ENCODE measurements at regions of chr3 and their contacts with region 1.

Region 1: GRCh38 chr3:194486540-194487288 is at the start of gene ATP13A3:
- DNase-seq: peak; percentile 90
- H3K4me3 Mint-ChIP-seq: peak within 1 kb of the TSS; percentile 86
- H3K27ac Mint-ChIP-seq: peak within 1 kb of the TSS; percentile 92
- H3K4me1 Mint-ChIP-seq: peaks cover 30% of the 10 kb centered on the region
- H3K27me3 Mint-ChIP-seq: no peaks in the 10 kb centered on the region
- CTCF ChIP-seq: no peak
- total RNA-seq, gene ATP13A3: 119 and 125 TPM in 2 replicates

Region 2: DNA sequence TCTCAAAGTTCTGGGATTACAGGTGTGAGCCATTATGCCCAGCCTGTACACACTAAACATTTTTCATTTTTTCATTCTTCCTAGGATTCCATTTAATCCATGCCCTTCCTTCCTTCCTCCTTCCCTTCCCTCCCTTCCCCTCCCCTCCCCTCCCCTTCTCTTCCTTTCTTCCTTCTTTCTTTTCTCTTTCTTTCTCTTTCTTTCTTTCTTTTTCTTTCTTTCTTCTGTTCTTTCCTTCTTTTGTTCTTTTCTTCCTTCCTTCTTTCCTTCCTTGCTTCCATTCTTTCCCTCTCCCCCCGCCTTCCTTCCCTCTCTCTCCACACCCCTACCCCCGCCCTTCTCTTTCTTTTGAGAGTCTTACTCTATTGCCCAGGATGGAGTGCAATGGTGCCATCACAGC is 41.0 kb after region 1 on chr3:
- CTCF ChIA-PET with region 1: no interaction called
- POLR2A ChIA-PET with region 1: interaction called, 8 read pairs
- intact Hi-C with region 1: loop called (anchors 1 kb)
- DNase-seq: no peak
- H3K4me3 Mint-ChIP-seq: peak overlapping the region; percentile 60
- H3K27ac Mint-ChIP-seq: peak overlapping the region; percentile 88
- H3K4me1 Mint-ChIP-seq: peaks cover 15% of the 10 kb centered on the region
- H3K27me3 Mint-ChIP-seq: no peaks in the 10 kb centered on the region
- CTCF ChIP-seq: no peak

Region 3: DNA sequence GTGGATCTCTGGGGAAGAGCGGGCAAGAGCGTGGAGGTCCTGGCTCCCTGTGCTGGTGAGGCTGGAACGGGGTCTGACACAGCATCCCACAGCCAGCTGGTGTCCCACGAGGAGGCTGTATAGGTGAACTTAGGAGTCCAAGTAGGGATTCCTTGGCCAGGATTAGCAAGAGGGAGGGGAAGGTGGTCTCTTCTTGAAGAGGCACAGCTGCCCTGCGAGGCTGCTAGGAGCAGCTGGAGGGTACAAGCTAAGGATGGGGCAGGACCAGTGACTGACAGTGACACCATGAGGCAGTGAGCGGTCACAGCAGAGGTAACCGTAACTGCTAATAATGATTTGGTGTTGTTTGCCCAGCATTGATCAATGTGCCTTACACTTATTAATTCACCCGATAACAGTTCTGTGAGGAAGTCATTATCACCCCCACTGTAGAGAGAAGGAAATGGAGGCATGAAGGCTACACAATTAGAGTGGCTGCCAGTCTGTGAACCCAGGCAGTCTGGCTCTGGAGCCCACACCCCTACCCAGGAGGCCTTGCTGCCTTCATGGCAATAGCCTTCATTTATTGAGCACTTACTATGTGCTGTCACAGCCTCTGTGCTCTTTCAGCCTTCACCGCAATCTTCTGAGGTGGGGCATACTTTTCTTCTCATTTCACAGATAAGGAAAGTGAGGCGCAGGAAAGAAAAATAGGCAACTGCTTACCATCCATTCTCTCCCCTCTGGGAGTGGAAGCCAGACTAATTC is 87.2 kb after region 1 on chr3:
- CTCF ChIA-PET with region 1: interaction called, 4 read pairs
- POLR2A ChIA-PET with region 1: interaction called, 5 read pairs
- intact Hi-C with region 1: loop called (anchors 1 kb)
- DNase-seq: peak; percentile 69
- H3K4me3 Mint-ChIP-seq: no peak overlapping the region
- H3K27ac Mint-ChIP-seq: no peak overlapping the region
- H3K4me1 Mint-ChIP-seq: peaks cover 38% of the 10 kb centered on the region
- H3K27me3 Mint-ChIP-seq: no peaks in the 10 kb centered on the region
- CTCF ChIP-seq: peak; percentile 41

Region 4: DNA sequence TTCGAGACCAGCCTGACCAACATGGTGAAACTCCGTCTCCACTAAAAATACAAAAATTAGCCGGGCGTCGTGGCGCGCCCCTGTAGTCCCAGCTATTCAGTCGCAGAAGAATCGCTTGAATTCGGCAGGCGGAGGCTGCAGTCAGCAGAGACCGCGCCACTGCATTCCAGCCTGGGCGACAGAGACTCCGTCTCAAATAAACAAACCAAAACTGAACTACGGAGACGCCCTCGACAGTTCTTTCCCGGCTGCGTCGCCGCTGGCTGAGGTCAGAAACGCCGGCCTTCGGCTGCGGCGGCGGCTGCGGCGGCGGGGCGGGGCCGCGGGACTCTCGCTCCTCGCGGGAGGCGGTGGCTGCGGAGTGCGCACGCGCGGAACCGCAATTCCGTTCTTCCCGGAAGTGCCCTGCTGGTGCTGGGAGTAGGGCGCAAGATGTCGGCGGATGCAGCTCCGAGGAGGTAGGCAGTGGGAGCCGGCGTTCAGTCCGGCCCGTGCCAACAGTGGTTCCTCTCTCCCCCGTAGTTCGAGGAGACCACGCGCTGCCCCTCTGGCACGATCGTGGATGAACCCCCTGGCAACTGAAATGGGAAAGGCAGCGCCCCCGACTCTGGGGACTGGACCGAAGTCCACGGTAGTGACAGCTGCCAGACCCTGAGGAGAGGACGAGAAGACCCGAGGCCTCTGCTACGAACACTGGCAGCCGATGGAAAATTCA is 97.0 kb after region 1 on chr3:
- CTCF ChIA-PET with region 1: interaction called, 5 read pairs
- POLR2A ChIA-PET with region 1: interaction called, 31 read pairs
- intact Hi-C with region 1: no loop called
- DNase-seq: peak; percentile 89
- H3K4me3 Mint-ChIP-seq: peak overlapping the region; percentile 96
- H3K27ac Mint-ChIP-seq: peak overlapping the region; percentile 96
- H3K4me1 Mint-ChIP-seq: peaks cover 20% of the 10 kb centered on the region
- H3K27me3 Mint-ChIP-seq: no peaks in the 10 kb centered on the region
- CTCF ChIP-seq: no peak

Measured in MCF 10A (cell line).